Activated B cell treated with CpG ODN at 0.5 μM for 24 hours (primary cell): ENCODE measurements at regions of chr10 and their contacts with region 1.

Region 1: GRCh38 chr10:100827819-100828737 is 82.7 kb downstream of the PAX2 start:
- DNase-seq: peak; percentile 44
- ATAC-seq: peak; percentile 48
- H3K4me3 Mint-ChIP-seq: peak overlapping the region; percentile 83
- H3K27ac Mint-ChIP-seq: peak overlapping the region; percentile 53
- H3K4me1 Mint-ChIP-seq: peaks cover 41% of the 10 kb centered on the region
- H3K27me3 Mint-ChIP-seq: peaks cover 60% of the 10 kb centered on the region
- CTCF ChIP-seq: no peak

Region 2: DNA sequence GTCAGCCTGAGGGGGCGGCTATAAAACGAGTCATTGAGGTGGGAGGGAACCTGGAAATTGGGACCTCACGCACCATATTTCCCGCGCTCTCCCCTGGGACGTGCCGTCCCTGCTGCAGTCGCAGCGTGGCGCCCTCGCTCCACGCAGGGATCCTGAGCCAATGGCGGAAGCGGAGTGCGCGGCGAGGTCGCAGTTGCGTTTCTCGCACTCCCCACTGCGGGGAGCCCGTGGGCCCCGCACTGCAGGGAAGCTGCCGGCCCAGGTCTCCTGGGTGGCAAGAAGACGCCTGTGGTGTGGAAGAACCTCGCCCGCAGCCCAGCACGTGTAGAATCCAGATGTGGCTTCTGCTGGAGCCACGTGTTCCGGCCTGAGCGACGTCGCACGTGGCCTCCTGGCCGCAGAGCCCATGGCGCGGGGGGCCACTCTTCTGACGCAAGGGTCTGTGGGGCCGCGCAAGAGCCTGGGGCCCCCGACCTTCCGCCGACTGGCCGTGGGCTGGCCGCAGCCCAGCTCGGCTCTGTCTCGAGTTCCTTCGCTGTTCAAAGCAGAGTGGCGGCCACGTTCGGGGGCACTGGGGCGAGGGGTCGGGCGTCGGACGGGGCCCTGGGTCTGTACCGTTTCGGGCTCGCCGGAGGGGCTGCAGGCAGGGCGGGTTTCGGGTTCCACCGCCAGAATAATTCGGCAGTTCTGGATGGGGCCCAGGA is 265.9 kb before region 1 on chr10:
- CTCF ChIA-PET with region 1: no interaction called
- POLR2A ChIA-PET with region 1: no interaction called
- intact Hi-C with region 1: loop called (anchors 2 kb)
- DNase-seq: peak; percentile 62
- ATAC-seq: peak; percentile 98
- H3K4me3 Mint-ChIP-seq: peak overlapping the region; percentile 20
- H3K27ac Mint-ChIP-seq: no peak overlapping the region
- H3K4me1 Mint-ChIP-seq: peaks cover 15% of the 10 kb centered on the region
- H3K27me3 Mint-ChIP-seq: peaks cover 46% of the 10 kb centered on the region
- CTCF ChIP-seq: no peak

Region 3: GRCh38 chr10:100670828-100671479 is 157.1 kb before region 1 on chr10:
- CTCF ChIA-PET with region 1: no interaction called
- POLR2A ChIA-PET with region 1: no interaction called
- intact Hi-C with region 1: loop called (anchors 1 kb)
- DNase-seq: peak; percentile 67
- ATAC-seq: peak; percentile 82
- H3K4me3 Mint-ChIP-seq: peak overlapping the region; percentile 32
- H3K27ac Mint-ChIP-seq: no peak overlapping the region
- H3K4me1 Mint-ChIP-seq: peaks cover 8% of the 10 kb centered on the region
- H3K27me3 Mint-ChIP-seq: peaks cover 58% of the 10 kb centered on the region
- CTCF ChIP-seq: no peak

Region 4: DNA sequence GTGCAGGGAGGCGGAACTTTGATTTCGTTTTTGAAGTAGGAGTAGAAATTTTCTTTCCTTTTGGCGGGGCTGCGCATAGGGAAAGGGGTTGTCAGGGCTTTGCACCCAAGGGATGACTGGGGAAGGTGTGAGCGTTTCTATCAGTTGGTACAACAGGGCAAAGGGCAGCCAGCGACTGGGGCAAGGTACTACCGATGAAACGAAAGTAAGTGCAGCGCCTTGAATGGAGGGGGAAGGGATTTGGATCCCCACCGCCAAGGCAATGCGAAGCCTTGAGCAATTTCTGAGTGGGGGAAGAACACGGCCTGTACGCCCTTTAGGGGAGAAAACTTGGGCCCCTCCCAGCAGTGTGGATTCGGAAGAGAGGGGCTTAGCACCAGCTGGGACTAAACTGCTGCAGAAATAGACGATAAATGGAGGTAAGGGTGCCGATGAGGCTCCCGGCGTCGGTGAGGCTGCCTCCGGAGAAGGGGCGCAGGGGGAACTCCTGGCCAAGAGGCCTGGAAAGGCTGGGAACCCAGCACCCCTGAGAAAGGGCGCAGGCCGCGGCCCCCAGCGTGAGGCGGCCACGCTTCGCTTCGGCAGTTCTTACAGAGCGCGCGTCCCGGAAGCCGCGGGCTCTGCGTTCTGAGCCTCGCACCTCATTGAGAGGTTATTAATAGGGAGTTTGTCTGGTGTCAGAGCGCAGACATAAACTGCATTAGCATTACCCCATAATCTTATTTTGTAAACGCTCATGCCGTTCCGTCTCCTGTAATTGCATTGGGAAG is 293.0 kb after region 1 on chr10:
- CTCF ChIA-PET with region 1: no interaction called
- POLR2A ChIA-PET with region 1: no interaction called
- intact Hi-C with region 1: loop called (anchors 10 kb)
- DNase-seq: peak; percentile 40
- ATAC-seq: peak; percentile 89
- H3K4me3 Mint-ChIP-seq: peak overlapping the region; percentile 97
- H3K27ac Mint-ChIP-seq: peak overlapping the region; percentile 68
- H3K4me1 Mint-ChIP-seq: peaks cover 29% of the 10 kb centered on the region
- H3K27me3 Mint-ChIP-seq: peaks cover 38% of the 10 kb centered on the region
- CTCF ChIP-seq: no peak

Region 5: GRCh38 chr10:101238732-101239105 is 410.6 kb after region 1 on chr10:
- CTCF ChIA-PET with region 1: no interaction called
- POLR2A ChIA-PET with region 1: no interaction called
- intact Hi-C with region 1: loop called (anchors 5 kb)
- DNase-seq: no peak
- ATAC-seq: no peak
- H3K4me3 Mint-ChIP-seq: no peak overlapping the region
- H3K27ac Mint-ChIP-seq: no peak overlapping the region
- H3K4me1 Mint-ChIP-seq: peaks cover 10% of the 10 kb centered on the region
- H3K27me3 Mint-ChIP-seq: peaks cover 66% of the 10 kb centered on the region
- CTCF ChIP-seq: no peak